ENCODE measurements at regions of chr1 and their contacts with region 1.

Region 1: GRCh38 chr1:50348449-50349241 is 74.6 kb downstream of the DMRTA2 start:
- DNase-seq: peak; percentile 75 to 78 (median 78)
- ATAC-seq: peak; percentile 95
- H3K4me3 ChIP-seq: no peak overlapping the region
- H3K27ac ChIP-seq: no peak overlapping the region
- H3K4me1 ChIP-seq: no peaks in the 10 kb centered on the region
- H3K27me3 ChIP-seq: 0 out of 5 replicates have a peak, but pooled peaks cover 0 to 5% of the 10 kb centered on the region in 2 experiments
- CTCF ChIP-seq: peak; percentile 79 to 93 (median 89)
- EP300 ChIP-seq: no peak
- POLR2A ChIP-seq: no peak
- RAD21 ChIP-seq: peak; percentile 73 to 88

Region 2: DNA sequence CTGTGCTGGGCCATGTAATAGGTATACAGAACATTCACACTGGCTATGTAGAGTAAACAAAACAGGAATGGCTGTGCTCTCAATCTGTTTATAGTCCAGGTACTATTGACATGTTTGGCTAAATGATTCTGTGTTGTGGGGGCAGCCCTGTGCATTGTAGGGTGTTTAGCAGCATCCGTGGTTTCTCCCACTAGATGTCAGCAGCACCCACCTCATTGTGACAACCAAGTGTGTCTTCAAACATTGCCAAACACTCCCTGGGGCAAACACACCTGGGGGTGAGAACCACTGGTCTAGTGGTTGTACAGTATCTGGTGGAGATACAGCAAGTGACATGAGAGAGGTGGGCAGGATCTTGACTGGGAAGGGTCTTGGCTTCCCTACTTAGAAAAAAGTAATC is 1796.2 kb before region 1 on chr1:
- CTCF ChIA-PET with region 1: no interaction called
- POLR2A ChIA-PET with region 1: no interaction called
- in situ Hi-C with region 1: loop called (anchors 10 kb)
- intact Hi-C with region 1: no loop called
- DNase-seq: peak in 1 of 4 experiments; percentile 16
- ATAC-seq: peak; percentile 55
- H3K4me3 ChIP-seq: no peak overlapping the region
- H3K27ac ChIP-seq: no peak overlapping the region
- H3K4me1 ChIP-seq: no peaks in the 10 kb centered on the region
- H3K27me3 ChIP-seq: no peaks in the 10 kb centered on the region
- CTCF ChIP-seq: peak in 2 of 3 experiments; percentile 30 to 34; a peak in 2 of 6 replicates
- EP300 ChIP-seq: no peak
- POLR2A ChIP-seq: no peak
- RAD21 ChIP-seq: peak in 1 of 2 experiments; percentile 21; a peak in 1 of 4 replicates

Region 3: GRCh38 chr1:48572646-48573261 is 1775.9 kb before region 1 on chr1:
- CTCF ChIA-PET with region 1: no interaction called
- POLR2A ChIA-PET with region 1: no interaction called
- in situ Hi-C with region 1: no loop called
- intact Hi-C with region 1: loop called (anchors 2 kb)
- DNase-seq: peak; percentile 37 to 49 (median 45)
- ATAC-seq: peak; percentile 91
- H3K4me3 ChIP-seq: no peak overlapping the region
- H3K27ac ChIP-seq: no peak overlapping the region
- H3K4me1 ChIP-seq: no peaks in the 10 kb centered on the region
- H3K27me3 ChIP-seq: no peaks in the 10 kb centered on the region
- CTCF ChIP-seq: peak; percentile 60 to 70 (median 65)
- EP300 ChIP-seq: no peak
- POLR2A ChIP-seq: no peak
- RAD21 ChIP-seq: peak; percentile 54 to 71

Region 4: DNA sequence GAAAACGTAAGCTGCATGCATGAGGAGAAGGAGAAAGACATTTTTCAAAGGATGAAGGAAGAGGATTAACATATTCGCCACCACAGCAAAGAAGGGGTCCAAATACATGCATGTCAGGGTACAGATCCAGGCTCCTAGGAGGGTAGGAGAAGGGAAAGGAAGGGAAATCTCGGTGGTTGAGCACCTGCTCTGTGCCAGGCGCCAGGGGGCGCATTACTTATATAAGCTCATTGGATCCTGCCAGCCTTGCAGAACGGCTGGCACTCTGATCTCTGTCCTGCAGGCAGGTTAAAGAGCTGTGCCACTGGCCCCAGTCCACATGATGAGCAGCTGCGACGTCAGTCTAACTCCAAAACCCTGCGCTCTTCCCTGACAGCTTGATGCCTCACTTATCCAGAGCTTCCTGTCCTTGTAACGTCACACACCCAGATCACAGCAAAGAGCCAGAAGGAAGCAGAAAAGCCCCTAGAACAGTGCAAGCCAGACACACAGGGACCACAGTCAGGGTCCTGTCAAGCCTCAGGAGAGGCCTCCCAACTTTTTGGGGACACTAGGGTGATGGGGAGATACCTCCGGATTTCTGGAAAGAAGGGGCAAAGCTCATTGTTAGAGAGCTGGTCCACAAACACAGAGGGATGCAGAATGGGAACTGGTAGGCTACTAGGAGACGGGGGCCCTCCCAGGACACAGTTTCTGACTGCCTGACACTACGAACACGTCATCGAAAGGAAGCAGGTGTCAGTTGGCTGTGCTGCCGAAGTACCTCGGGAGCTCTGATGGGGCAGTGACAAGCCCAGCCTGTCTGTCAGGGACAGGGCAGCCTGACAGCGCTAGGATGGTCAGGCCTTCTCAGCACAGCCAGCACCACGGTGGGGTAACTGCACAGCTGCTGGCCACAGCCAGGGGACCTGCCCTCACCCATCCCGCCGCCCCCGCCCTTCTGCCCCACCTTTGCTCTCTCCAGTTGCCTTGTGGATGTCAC is 1671.0 kb before region 1 on chr1:
- CTCF ChIA-PET with region 1: no interaction called
- POLR2A ChIA-PET with region 1: no interaction called
- in situ Hi-C with region 1: loop called (anchors 10 kb)
- intact Hi-C with region 1: loop called (anchors 1 kb)
- DNase-seq: peak; percentile 35 to 69 (median 46)
- ATAC-seq: peak; percentile 87
- H3K4me3 ChIP-seq: no peak overlapping the region
- H3K27ac ChIP-seq: no peak overlapping the region
- H3K4me1 ChIP-seq: no peaks in the 10 kb centered on the region
- H3K27me3 ChIP-seq: no peaks in the 10 kb centered on the region
- CTCF ChIP-seq: peak; percentile 46 to 69 (median 61)
- EP300 ChIP-seq: no peak
- POLR2A ChIP-seq: no peak
- RAD21 ChIP-seq: peak in 1 of 2 experiments; percentile 51; a peak in 2 of 4 replicates

Region 5: GRCh38 chr1:50208315-50208714 is 140.3 kb before region 1 on chr1:
- CTCF ChIA-PET with region 1: no interaction called
- POLR2A ChIA-PET with region 1: no interaction called
- in situ Hi-C with region 1: no loop called
- intact Hi-C with region 1: no loop called
- DNase-seq: no peak
- ATAC-seq: no peak
- H3K4me3 ChIP-seq: no peak overlapping the region
- H3K27ac ChIP-seq: no peak overlapping the region
- H3K4me1 ChIP-seq: no peaks in the 10 kb centered on the region
- H3K27me3 ChIP-seq: no peaks in the 10 kb centered on the region
- CTCF ChIP-seq: no peak
- EP300 ChIP-seq: no peak
- POLR2A ChIP-seq: no peak
- RAD21 ChIP-seq: no peak

Measured in K562 (cell line).